ENCODE measurements at regions of chr11 and their contacts with region 1.

Region 1: GRCh38 chr11:75388386-75389275 is 10.7 kb upstream of the RPS3 start:
- DNase-seq: peak; percentile 59 to 63 (median 61)
- ATAC-seq: peak; percentile 81 to 84 (median 84)
- H3K4me3 ChIP-seq: no peak overlapping the region
- H3K27ac ChIP-seq: no peak overlapping the region
- H3K4me1 ChIP-seq: peaks cover 0 to 4% (median 0%) of the 10 kb centered on the region in 4 donors
- H3K27me3 ChIP-seq: no peaks in the 10 kb centered on the region
- CTCF ChIP-seq: peak; percentile 79 to 82 (median 80)
- POLR2A ChIP-seq: no peak

Region 2: DNA sequence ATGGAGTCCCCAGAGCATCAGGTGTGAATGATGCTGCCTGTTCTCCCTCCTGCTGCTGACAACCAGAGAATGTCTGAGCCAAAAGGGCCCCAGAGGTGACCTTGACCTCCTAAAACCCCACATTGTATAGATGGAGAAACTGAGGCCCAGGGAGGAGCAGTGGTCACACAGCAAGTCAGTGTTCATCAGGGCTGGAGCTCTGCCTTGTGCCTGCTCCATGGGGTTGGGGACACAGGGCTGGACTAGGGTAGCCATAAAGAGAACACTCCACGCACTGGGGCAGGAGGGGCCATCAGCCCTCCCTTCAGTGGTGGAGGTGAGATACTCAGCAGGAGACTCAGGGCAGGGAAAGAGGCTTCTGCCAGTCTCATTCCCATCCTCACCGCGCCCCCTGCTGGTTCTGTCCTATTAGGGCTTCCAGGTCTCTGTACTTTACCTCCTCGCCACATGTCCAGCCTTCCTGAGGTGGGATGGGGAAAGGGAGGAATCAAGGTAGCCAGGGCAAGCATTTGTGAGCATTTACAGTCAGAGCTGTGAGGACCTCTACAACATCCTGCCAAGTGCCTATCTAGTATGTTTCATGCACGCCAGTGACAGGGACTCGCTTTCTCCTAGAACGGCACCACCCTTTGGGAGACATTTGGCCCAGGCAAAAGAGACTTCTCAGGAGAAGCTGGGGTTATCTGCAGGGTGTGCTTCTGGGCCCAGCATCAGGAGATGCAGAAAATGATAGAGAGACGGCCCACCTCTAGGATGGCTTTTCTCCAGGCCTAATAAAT is 356.7 kb before region 1 on chr11:
- intact Hi-C with region 1: no loop called
- DNase-seq: peak; percentile 79 to 83 (median 79)
- ATAC-seq: peak; percentile 86 to 93 (median 92)
- H3K4me3 ChIP-seq: no peak overlapping the region
- H3K27ac ChIP-seq: no peak overlapping the region
- H3K4me1 ChIP-seq: no peaks in the 10 kb centered on the region
- H3K27me3 ChIP-seq: no peaks in the 10 kb centered on the region
- CTCF ChIP-seq: peak; percentile 66 to 79 (median 72)
- POLR2A ChIP-seq: no peak

Region 3: DNA sequence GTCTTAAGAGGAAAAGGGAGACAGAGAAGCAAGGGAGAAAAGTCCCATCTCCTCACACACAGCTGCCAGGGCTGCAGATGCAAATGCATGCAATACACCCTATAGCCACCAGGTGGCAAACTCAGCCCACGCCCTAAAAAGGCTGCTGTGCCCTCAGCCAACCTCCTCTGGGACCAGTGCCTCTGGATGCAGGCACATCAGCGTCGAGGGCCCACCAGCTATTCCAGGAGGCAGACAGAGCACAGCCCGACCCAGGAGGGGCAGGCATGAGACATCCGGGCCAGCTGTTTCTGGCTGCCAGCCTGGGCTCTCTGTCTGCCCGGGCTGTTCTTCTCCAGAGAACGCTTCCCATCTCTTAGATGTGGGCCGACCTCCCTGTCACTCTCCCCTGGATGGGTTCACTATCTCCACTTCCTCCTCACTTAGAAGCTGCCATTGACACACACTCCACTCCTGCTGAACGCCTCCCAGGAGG is 108.4 kb before region 1 on chr11:
- intact Hi-C with region 1: loop called (anchors 2 to 5 kb)
- DNase-seq: peak; percentile 69 to 77 (median 76)
- ATAC-seq: peak; percentile 81 to 91 (median 90)
- H3K4me3 ChIP-seq: no peak overlapping the region
- H3K27ac ChIP-seq: no peak overlapping the region
- H3K4me1 ChIP-seq: no peaks in the 10 kb centered on the region
- H3K27me3 ChIP-seq: no peaks in the 10 kb centered on the region
- CTCF ChIP-seq: peak; percentile 96 to 98 (median 98)
- POLR2A ChIP-seq: no peak

Region 4: DNA sequence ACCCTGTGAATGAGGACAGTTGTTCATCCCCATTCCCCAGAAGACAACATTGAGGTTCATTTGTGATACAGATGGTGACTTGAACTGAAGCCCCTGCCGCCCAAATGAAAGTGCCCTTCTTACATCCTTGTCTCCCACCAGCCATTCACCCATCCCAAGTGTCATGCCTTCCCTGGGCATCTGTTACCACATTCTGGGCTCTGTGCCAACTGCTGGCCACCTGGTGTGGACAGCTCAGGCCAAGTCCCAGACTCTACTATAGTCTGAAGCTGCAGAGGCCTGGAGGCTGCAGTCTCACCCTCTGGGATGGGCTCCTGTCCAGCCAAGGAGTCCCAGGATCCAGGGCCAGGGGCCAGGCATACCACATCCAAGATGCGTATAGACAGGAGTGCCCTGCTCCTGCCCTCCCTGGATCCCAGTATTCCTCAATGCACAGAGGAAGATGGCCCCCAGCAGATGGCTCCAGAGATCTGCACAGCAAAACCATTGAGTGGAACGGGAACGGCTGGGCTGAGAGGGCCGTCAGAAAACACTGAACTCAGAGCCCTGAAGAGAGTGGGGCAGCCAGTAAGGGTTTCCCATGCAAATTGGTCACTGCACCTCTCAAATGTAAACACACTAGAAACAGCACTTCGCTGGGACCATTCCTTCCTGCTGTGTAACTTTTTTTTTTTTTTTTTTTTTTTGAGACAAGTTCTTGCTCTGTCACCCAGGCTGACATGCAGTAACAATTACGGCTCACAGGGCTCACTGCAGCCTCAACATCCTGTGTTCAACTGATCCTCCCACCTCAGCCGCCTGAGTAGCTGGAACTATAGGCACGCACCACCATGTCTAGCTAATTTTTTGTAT is 60.0 kb before region 1 on chr11:
- intact Hi-C with region 1: loop called (anchors 10 kb)
- DNase-seq: peak; percentile 77 to 84 (median 80)
- ATAC-seq: peak; percentile 88 to 94 (median 93)
- H3K4me3 ChIP-seq: no peak overlapping the region
- H3K27ac ChIP-seq: peak overlapping the region in 1 of 3 donors; percentile 10
- H3K4me1 ChIP-seq: peaks cover 0 to 22% (median 7%) of the 10 kb centered on the region in 4 donors
- H3K27me3 ChIP-seq: no peaks in the 10 kb centered on the region
- CTCF ChIP-seq: peak; percentile 77 to 81 (median 78)
- POLR2A ChIP-seq: no peak

Region 5: GRCh38 chr11:75337195-75337654 is 51.4 kb before region 1 on chr11:
- intact Hi-C with region 1: loop called in 1 of 2 experiments (anchors 10 kb)
- DNase-seq: no peak
- ATAC-seq: peak in 3 of 4 donors; percentile 3 to 14 (median 4)
- H3K4me3 ChIP-seq: no peak overlapping the region
- H3K27ac ChIP-seq: peak overlapping the region in 1 of 3 donors; percentile 13
- H3K4me1 ChIP-seq: peaks cover 0 to 49% (median 21%) of the 10 kb centered on the region in 4 donors
- H3K27me3 ChIP-seq: no peaks in the 10 kb centered on the region
- CTCF ChIP-seq: no peak
- POLR2A ChIP-seq: no peak

Region 6: DNA sequence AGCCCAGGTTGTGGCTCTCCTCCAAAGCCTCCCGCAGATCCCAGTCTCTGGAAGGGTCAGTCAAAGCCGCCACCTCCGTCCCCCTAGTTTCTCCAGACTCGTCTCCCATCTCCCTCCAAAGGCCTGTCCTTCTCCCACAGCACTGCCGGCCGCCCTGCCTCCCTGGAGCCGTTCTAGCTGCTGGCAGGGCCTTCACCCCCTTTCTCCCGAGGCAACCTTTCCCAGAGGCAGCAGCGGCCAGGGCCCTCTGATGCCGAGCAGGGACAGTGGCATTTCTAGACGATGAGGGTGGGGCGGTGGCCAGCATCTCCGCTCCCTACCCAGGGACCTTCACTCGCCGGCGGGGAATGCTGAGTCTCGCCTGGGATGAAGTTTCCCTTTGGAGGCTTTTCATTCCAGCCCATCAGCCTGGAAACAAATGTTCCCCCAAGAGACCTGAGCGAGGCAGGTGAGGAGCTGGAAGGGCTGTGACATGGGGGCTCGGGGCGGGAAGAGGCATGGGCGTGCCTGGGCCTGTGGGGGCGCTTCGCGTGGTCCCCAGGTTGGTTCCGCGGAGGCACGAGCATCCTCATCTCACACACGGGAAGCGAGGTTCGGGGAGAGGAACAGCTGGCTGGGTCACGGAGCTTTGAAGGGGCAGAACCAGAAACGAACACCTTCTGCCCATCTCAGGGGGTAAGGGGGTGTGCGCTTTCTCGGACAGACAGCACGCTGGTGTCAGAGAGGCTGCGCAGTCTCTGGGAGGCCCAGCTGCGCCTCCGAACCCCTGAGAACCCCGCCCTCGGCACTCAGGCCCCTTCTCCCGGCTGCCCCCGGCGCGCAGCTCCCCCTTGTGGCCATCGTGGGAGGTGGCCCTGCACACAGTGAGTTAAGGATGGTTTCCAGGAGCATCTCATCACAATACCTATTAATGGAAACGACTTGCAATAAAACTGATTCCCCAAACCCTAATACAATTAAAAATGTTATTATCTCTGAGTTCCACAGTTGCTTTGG is 62.5 kb after region 1 on chr11:
- intact Hi-C with region 1: no loop called
- DNase-seq: no peak
- ATAC-seq: peak in 1 of 4 donors; percentile 30
- H3K4me3 ChIP-seq: no peak overlapping the region
- H3K27ac ChIP-seq: no peak overlapping the region
- H3K4me1 ChIP-seq: no peaks in the 10 kb centered on the region
- H3K27me3 ChIP-seq: no peaks in the 10 kb centered on the region
- CTCF ChIP-seq: peak; percentile 10 to 43 (median 34)
- POLR2A ChIP-seq: no peak

Measured in right lobe of liver (tissue), 6 donors.